Calu3 (cell line): ENCODE measurements at regions of chr19 and their contacts with region 1.

Region 1: GRCh38 chr19:6218491-6219162 is 61.1 kb downstream of the MLLT1 start:
- DNase-seq: peak; percentile 75
- H3K4me3 Mint-ChIP-seq: no peak overlapping the region
- H3K27ac Mint-ChIP-seq: no peak overlapping the region
- H3K4me1 Mint-ChIP-seq: no peaks in the 10 kb centered on the region
- H3K27me3 Mint-ChIP-seq: no peaks in the 10 kb centered on the region
- CTCF ChIP-seq: peak; percentile 78

Region 2: DNA sequence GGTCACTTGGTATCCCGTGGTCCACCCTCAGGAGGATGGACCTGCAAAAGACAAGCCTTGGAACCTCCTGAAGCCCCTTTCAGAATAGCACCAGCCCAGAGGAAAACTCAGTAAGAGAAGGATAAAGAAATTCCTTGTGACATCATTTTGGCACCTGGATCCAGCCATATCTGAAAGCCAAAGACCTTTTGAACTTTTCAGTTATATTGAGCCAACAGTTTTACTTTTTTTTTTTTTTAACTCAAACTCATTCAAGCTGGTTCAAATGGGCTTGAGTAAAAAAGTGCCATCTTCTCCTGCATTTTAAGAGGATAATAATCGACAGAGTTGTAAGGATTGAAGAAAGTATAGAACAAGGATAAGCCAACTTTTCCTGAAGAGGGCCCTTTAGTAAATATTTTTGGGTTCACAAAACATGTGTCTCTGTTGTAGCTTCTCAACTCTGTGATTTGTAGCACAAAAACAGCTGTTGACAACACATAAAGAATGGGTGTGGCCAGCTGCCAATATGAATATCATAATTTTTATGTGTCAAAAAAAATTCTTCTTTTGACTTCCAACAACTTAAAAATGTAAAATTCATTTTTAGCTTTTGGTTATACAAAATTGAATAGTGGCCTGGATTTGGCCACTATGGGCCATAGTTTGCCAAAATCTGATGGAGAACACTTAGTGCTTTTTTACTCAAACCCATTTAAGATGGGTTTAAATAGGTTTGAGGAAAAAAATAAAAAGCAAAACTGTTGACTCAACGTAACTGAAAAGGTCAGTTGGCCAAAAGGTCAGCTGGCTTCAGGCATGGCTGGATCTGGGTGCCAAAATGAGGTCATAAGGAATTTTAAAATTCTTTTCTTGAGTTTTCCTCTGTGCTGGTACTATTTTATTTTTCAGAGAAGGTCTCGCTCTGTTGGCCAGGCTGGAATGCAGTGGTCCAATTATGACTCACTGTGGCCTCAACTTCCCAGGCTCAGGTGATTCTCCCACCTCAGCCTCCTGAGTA is 32.5 kb before region 1 on chr19:
- CTCF ChIA-PET with region 1: no interaction called
- intact Hi-C with region 1: no loop called
- DNase-seq: no peak
- H3K4me3 Mint-ChIP-seq: no peak overlapping the region
- H3K27ac Mint-ChIP-seq: no peak overlapping the region
- H3K4me1 Mint-ChIP-seq: no peaks in the 10 kb centered on the region
- H3K27me3 Mint-ChIP-seq: peaks cover 22% of the 10 kb centered on the region
- CTCF ChIP-seq: no peak

Region 3: GRCh38 chr19:6260912-6261650 is 42.5 kb after region 1 on chr19:
- CTCF ChIA-PET with region 1: no interaction called
- intact Hi-C with region 1: no loop called
- DNase-seq: peak; percentile 23
- H3K4me3 Mint-ChIP-seq: no peak overlapping the region
- H3K27ac Mint-ChIP-seq: no peak overlapping the region
- H3K4me1 Mint-ChIP-seq: no peaks in the 10 kb centered on the region
- H3K27me3 Mint-ChIP-seq: no peaks in the 10 kb centered on the region
- CTCF ChIP-seq: peak; percentile 44

Region 4: DNA sequence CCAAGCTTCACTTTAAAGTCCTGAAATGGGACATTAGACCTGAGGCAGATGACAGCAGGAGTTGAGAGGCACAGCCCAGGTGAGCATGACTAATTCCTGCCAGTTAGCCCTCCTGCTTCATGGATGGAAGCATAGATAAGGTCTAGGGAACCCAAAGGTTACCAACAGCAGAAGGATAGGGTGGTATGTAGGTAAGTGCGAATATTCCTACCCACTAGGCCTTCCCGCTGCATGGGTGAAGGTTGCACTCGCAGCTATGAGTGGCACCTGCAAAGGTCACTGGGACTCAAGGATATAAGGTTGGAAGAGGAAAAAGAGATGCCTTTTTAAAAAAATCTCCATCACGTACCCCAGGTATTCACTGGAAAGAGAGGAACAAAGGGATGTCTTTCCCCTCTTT is 73.4 kb after region 1 on chr19:
- CTCF ChIA-PET with region 1: interaction called, 3 read pairs
- intact Hi-C with region 1: loop called (anchors 10 kb)
- DNase-seq: no peak
- H3K4me3 Mint-ChIP-seq: no peak overlapping the region
- H3K27ac Mint-ChIP-seq: no peak overlapping the region
- H3K4me1 Mint-ChIP-seq: no peaks in the 10 kb centered on the region
- H3K27me3 Mint-ChIP-seq: no peaks in the 10 kb centered on the region
- CTCF ChIP-seq: no peak

Region 5: DNA sequence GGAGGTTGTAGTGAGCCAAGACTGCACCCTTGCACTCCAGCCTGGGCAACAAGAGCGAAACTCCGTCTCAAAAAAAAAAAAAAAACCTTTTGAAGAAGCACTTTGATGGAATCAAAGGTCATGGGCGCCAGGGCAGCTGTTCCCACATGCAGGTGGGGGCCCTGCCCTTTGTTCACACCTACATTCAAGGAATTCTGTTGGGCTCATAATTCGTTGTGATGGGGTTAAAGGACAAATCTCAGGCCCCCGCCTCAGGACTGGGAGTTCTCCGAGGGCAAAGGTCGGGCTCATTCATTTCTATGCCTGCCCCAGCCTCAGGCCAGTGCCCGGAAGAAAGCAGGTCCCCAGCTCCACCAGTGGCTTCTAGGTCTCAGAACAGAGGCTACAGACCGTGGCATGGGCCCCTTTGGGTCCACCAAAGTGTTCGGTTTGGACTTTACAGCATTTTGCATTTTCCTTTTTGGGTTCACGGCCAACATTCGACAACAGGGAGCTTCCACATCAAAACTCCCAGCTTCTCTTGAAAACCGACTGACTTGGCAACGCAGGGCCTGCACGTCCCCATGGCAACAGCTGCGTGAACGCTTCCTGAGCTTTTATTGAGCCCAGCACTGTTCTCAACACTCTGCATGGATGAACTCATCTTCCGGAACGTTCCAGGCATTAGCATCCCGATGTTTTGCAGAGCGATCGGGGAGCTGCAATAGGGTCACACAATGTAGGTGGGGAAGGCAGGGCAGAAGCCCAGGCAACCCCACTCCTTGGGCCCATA is 184.4 kb after region 1 on chr19:
- CTCF ChIA-PET with region 1: no interaction called
- intact Hi-C with region 1: no loop called
- DNase-seq: no peak
- H3K4me3 Mint-ChIP-seq: no peak overlapping the region
- H3K27ac Mint-ChIP-seq: no peak overlapping the region
- H3K4me1 Mint-ChIP-seq: no peaks in the 10 kb centered on the region
- H3K27me3 Mint-ChIP-seq: no peaks in the 10 kb centered on the region
- CTCF ChIP-seq: no peak